ENCODE measurements at regions of chr3 and their contacts with region 1.

Region 1: GRCh38 chr3:32340039-32340438 is 51.6 kb upstream of the CMTM7 start:
- DNase-seq: no peak
- ATAC-seq: peak; percentile 86 to 87

Region 2: GRCh38 chr3:32296256-32297204 is 43.5 kb before region 1 on chr3:
- intact Hi-C with region 1: loop called in 1 of 2 experiments (anchors 2 kb)
- DNase-seq: peak; percentile 48
- ATAC-seq: peak; percentile 74 to 79

Region 3: DNA sequence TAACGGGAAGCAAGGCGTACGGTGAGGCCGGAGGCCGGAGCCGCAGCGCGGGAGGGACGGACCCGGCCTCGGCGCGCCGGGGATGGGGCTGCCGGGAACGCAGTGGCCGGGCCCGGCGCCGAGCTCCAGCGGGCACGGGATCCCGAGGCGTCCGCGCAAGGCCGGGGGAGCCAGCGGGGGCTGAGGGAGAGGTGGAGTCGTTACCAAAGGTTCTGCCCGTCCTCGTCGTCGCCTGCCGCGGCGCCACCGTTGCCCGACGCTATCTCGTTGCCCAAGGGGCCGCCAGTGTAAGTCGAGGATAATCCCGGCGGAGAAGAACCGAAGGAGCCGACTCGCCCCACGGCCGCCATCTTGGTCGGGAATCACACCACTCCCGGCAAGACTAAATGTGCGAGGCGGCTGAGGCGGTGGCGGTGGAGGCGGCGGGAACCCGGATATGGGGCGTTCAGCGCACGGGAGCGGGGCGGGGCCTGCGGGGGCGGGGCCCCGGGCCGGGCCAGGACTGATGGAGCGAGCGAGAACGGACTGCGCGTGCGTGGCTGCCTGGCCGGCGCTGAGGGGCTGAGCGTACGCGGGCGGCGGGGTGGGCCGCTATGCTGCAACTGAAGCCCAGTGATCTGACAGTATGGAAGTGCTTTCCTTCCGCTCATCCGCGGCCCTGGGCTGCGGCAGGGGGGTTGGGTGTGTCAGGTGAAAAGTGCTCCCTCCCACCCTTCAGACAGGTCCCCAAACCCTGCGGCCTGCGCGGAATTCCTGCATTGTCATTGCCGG is 230.6 kb after region 1 on chr3 and contains the start of gene DYNC1LI1:
- intact Hi-C with region 1: no loop called
- DNase-seq: peak; percentile 97
- ATAC-seq: peak; percentile 98
- total RNA-seq, gene DYNC1LI1: 34.3 to 38.4 TPM